PC-9 (cell line): ENCODE measurements at regions of chr11 and their contacts with region 1.

Region 1: DNA sequence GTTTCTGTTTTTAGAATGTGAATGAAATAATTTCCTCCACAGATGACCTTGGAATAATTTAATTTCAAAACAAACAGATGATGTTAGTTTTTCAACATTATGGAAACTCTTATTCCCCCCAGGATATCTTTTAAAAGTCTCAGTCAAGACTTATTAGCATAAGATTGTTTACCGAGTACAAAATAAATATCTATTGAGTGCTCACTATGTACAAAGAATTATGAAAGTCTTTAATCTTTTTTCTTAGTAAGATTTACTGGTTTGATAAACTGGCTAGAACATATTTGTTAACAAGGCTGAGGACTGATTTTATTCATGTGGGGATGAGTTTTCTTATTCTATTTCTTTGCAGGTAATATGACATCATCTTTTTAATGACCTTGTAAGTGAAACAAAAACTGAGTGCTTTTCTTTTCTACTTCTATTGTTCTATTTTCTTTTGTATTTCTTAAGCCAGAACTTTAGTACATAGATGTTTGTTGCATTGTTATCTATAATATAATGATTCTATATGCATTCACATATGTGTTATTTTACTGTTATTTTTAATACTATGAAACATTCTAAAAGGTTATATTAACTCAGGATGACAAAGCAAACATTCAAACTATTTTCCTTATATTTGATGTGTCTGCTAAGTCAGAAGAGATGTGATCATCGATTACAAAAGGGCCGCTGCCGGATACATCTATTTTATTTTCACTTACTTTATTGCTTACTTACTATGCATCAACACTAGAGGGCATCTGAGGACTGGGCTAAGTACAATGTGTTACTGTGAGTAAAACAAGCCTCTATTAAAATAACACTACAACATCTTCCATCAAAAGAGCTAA is 111.0 kb upstream of the ARHGAP42 start:
- DNase-seq: peak; percentile 6 to 67
- H3K4me3 ChIP-seq: no peak overlapping the region
- H3K27ac ChIP-seq: no peak overlapping the region
- H3K4me1 ChIP-seq: peaks cover 6% of the 10 kb centered on the region
- H3K27me3 ChIP-seq: no peaks in the 10 kb centered on the region
- CTCF ChIP-seq: peak; percentile 97

Region 2: DNA sequence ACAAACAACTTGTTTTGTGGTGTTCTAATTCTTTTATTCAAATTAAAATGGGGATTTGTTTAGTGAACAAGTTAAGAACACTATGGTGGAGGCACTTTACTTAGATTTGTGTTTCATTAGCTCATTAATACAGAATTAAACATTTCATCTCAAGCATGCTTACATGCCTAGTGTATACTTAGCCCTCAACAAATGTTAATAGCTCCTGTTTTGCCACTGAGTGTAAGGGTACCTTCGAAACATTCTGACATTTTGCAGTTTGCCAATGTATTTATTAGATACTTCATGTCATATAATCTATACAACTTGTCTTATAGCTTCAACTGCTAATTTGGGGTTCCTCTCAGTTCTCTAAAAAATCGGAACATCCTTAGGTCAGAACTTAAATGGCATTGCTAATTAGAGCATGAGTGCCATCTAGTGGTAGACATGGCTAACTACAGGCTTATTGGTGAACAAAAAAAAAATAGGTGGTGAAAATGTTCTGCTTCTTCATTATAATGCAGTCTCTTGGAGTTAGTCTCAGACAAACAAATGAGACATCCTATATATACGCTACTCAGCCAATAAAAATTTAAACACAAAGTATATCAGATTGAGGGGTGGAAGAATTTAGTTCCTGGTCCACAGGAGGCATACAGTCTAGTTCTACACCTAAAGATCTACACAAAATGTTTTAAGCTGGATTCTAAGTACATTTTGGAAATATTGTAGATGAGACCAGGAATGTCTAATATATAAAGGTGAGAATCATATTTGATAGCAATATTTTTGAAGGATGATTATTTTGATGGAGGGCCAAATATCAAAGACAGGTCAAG is 1560.2 kb before region 1 on chr11:
- CTCF ChIA-PET with region 1: no interaction called
- POLR2A ChIA-PET with region 1: no interaction called
- intact Hi-C with region 1: loop called (anchors 10 kb)
- DNase-seq: peak in 1 of 2 experiments; percentile 50
- H3K4me3 ChIP-seq: no peak overlapping the region
- H3K27ac ChIP-seq: no peak overlapping the region
- H3K4me1 ChIP-seq: no peaks in the 10 kb centered on the region
- H3K27me3 ChIP-seq: peaks cover 22% of the 10 kb centered on the region
- CTCF ChIP-seq: peak; percentile 98

Region 3: DNA sequence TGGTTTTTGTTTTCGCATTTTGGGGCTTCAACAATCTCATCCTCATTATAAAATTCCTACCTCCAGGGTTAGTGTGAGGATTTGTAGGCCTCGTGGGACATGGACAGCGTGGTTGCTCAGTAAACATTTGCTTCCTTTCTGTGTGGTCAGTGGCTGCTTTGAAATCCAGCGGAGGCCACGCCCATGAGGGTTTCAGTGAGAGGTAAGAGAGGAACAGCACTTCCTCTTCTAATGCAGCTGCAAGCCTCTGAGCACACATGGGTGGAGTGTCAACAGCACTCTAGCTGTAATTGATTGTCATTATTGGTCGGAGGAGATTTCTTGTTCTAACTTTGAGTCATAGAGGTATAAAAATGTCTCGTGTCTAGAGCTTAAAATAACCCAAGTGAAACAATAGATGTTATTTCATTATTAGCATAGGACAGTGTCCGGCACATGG is 105.0 kb after region 1 on chr11:
- CTCF ChIA-PET with region 1: interaction called, 11 read pairs
- POLR2A ChIA-PET with region 1: no interaction called
- intact Hi-C with region 1: loop called (anchors 1 kb)
- DNase-seq: peak; percentile 64 to 87
- H3K4me3 ChIP-seq: no peak overlapping the region
- H3K27ac ChIP-seq: 0 out of 2 replicates have a peak overlapping the region, but pooled peaks have one; percentile 20
- H3K4me1 ChIP-seq: peaks cover 34% of the 10 kb centered on the region
- H3K27me3 ChIP-seq: no peaks in the 10 kb centered on the region
- CTCF ChIP-seq: no peak

Region 4: GRCh38 chr11:100855466-100856067 is 279.5 kb after region 1 on chr11:
- CTCF ChIA-PET with region 1: interaction called, 9 read pairs
- POLR2A ChIA-PET with region 1: no interaction called
- intact Hi-C with region 1: loop called (anchors 1 kb)
- DNase-seq: peak in 1 of 2 experiments; percentile 59
- H3K4me3 ChIP-seq: no peak overlapping the region
- H3K27ac ChIP-seq: no peak overlapping the region
- H3K4me1 ChIP-seq: peaks cover 3% of the 10 kb centered on the region
- H3K27me3 ChIP-seq: no peaks in the 10 kb centered on the region
- CTCF ChIP-seq: peak; percentile 89

Region 5: GRCh38 chr11:100930185-100930778 is 354.2 kb after region 1 on chr11:
- CTCF ChIA-PET with region 1: interaction called, 4 read pairs
- POLR2A ChIA-PET with region 1: no interaction called
- intact Hi-C with region 1: loop called (anchors 1 kb)
- DNase-seq: peak in 1 of 2 experiments; percentile 71
- H3K4me3 ChIP-seq: no peak overlapping the region
- H3K27ac ChIP-seq: no peak overlapping the region
- H3K4me1 ChIP-seq: peaks cover 35% of the 10 kb centered on the region
- H3K27me3 ChIP-seq: no peaks in the 10 kb centered on the region
- CTCF ChIP-seq: peak; percentile 90